Sigmoid colon (tissue), 7 donors: ENCODE measurements at regions of chr6 and their contacts with region 1.

Region 1: GRCh38 chr6:13336553-13336952 is 8.2 kb upstream of the TBC1D7 start:
- DNase-seq: peak; percentile 84
- H3K4me3 ChIP-seq: no peak overlapping the region
- H3K27ac ChIP-seq: peak overlapping the region in 2 of 4 donors; percentile 26 to 31
- H3K4me1 ChIP-seq: peaks cover 0 to 6% (median 2%) of the 10 kb centered on the region in 4 donors
- H3K27me3 ChIP-seq: no peaks in the 10 kb centered on the region
- CTCF ChIP-seq: peak; percentile 53 to 97 (median 91)
- EP300 ChIP-seq: no peak
- POLR2A ChIP-seq: no peak

Region 2: DNA sequence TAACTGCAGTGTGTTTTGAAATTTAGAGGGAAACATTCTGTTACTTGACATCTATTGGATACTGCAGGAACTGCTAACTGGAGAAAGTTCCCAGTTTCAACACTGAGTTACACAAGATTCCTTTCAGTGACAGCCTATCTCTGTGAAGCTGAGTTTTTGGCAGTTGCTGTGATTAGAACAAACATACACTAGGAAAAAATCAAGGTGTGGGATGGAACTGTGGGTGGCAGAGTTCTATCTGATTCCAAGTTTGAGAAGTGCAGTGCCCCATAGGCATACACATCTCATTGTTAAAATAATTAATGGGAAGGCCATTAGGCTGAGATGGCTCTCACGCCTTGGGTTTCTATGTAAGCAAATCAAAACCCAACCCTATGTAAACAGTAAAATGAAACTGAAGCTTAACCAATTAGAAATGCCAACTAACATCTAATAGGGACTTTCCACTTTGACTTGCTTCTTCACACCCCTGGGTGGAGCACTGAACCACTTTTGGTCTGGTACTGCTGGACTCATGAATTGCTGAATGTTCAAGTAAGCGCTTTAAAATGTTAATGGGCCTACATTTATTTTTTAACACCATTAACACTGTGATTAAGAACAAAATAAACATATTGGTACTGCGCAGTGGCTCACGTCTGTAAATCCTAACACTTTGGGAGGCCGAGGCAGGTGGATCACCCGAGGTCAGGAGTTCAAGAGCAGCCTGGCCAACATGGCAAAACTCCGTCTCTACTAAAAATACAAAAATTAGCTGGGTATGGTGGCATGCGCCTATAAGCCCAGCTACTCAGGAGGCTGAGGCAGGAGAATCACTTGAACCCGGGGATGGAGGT is 47.0 kb after region 1 on chr6:
- intact Hi-C with region 1: loop called (anchors 2 kb)
- DNase-seq: no peak
- H3K4me3 ChIP-seq: no peak overlapping the region
- H3K27ac ChIP-seq: peak overlapping the region; percentile 34 to 68 (median 50)
- H3K4me1 ChIP-seq: peaks cover 0 to 34% (median 15%) of the 10 kb centered on the region in 4 donors
- H3K27me3 ChIP-seq: no peaks in the 10 kb centered on the region
- CTCF ChIP-seq: peak in 2 of 4 experiments; percentile 21 to 25
- EP300 ChIP-seq: no peak
- POLR2A ChIP-seq: no peak

Region 3: GRCh38 chr6:13536796-13537526 is 200.4 kb after region 1 on chr6:
- intact Hi-C with region 1: loop called (anchors 2 kb)
- DNase-seq: no peak
- H3K4me3 ChIP-seq: no peak overlapping the region
- H3K27ac ChIP-seq: no peak overlapping the region
- H3K4me1 ChIP-seq: no peaks in the 10 kb centered on the region
- H3K27me3 ChIP-seq: no peaks in the 10 kb centered on the region
- CTCF ChIP-seq: no peak
- EP300 ChIP-seq: no peak
- POLR2A ChIP-seq: no peak

Region 4: DNA sequence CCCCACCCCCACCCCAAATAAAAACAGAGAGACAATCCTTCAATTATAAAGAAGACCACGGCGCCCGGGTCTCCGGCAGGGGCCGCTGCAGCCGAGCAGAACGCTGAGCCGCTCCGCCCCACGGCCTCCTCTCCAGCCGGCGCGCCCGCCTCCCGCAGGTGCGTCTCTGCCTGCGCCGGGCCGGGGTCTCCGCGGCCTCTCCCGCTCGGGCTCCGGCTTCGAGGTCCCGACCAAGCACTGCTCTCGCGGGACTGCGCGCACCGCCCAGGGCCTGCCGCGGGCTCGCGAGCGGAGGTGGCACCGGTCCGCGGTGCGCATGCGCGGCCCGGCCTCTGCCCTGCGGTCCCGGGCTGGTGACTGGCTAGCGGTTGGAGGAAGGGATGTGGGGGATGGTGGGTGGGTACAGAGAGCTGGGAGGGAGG is 237.6 kb after region 1 on chr6:
- intact Hi-C with region 1: loop called (anchors 2 kb)
- DNase-seq: peak; percentile 95
- H3K4me3 ChIP-seq: peak overlapping the region; percentile 61 to 97 (median 87)
- H3K27ac ChIP-seq: peak overlapping the region; percentile 88 to 99 (median 98)
- H3K4me1 ChIP-seq: peaks cover 0 to 18% (median 8%) of the 10 kb centered on the region in 4 donors
- H3K27me3 ChIP-seq: no peaks in the 10 kb centered on the region
- CTCF ChIP-seq: peak in 1 of 4 experiments; percentile 45
- EP300 ChIP-seq: no peak
- POLR2A ChIP-seq: no peak

Region 5: GRCh38 chr6:14066782-14067406 is 730.3 kb after region 1 on chr6:
- intact Hi-C with region 1: loop called (anchors 10 kb)
- DNase-seq: no peak
- H3K4me3 ChIP-seq: no peak overlapping the region
- H3K27ac ChIP-seq: no peak overlapping the region
- H3K4me1 ChIP-seq: no peaks in the 10 kb centered on the region
- H3K27me3 ChIP-seq: no peaks in the 10 kb centered on the region
- CTCF ChIP-seq: peak; percentile 40 to 65 (median 57)
- EP300 ChIP-seq: no peak
- POLR2A ChIP-seq: no peak